ENCODE measurements at regions of chr4 and their contacts with region 1.

Region 1: DNA sequence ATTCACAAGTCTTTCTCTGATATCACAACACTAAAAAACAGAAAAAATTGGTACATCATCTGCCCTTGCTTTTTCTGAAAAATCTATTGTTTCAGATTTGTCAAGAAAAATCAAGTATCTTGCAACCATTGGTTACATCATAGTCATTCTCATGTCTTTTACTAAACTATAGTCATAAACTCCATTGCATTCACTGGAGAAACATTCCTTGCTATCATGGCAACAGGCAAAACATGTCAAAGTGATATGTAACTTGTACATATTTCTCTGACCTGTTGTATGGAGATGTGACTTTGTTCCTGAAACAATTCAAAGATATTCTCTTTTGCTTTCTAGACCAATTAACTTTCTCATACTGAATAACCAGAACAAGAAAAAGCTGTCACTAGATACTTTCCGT is 121.9 kb upstream of the ANK2 start:
- DNase-seq: no peak
- H3K4me3 ChIP-seq: no peak overlapping the region
- H3K27ac ChIP-seq: no peak overlapping the region
- H3K4me1 ChIP-seq: peaks cover 6% of the 10 kb centered on the region
- H3K27me3 ChIP-seq: no peaks in the 10 kb centered on the region
- CTCF ChIP-seq: no peak
- POLR2A ChIP-seq: no peak

Region 2: DNA sequence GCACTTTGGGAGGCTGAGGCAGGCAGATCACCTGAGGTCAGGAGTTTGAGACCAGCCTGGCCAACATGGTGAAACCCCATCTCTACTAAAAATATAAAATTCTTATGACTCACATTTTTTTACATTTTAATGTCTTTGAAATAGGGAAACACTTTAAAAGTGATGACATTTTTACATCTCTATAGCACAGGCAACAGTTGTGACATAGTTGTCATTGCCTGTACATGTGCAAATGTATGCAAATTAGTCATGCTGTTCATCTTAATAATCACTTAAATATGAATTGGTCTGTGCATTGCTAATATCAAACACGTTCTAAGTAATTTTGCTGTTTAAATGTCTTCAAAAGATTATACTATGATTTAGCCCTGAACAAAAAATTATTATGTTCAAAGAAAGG is 332.6 kb before region 1 on chr4:
- intact Hi-C with region 1: no loop called
- DNase-seq: no peak
- H3K4me3 ChIP-seq: no peak overlapping the region
- H3K27ac ChIP-seq: no peak overlapping the region
- H3K4me1 ChIP-seq: no peaks in the 10 kb centered on the region
- H3K27me3 ChIP-seq: no peaks in the 10 kb centered on the region
- CTCF ChIP-seq: no peak
- POLR2A ChIP-seq: no peak

Region 3: GRCh38 chr4:112626228-112626627 is 301.3 kb before region 1 on chr4:
- intact Hi-C with region 1: no loop called
- DNase-seq: no peak
- H3K4me3 ChIP-seq: no peak overlapping the region
- H3K27ac ChIP-seq: no peak overlapping the region
- H3K4me1 ChIP-seq: no peaks in the 10 kb centered on the region
- H3K27me3 ChIP-seq: no peaks in the 10 kb centered on the region
- CTCF ChIP-seq: no peak
- POLR2A ChIP-seq: no peak

Region 4: GRCh38 chr4:112648263-112649054 is 279.1 kb before region 1 on chr4:
- intact Hi-C with region 1: loop called (anchors 10 kb)
- DNase-seq: no peak
- H3K4me3 ChIP-seq: no peak overlapping the region
- H3K27ac ChIP-seq: no peak overlapping the region
- H3K4me1 ChIP-seq: no peaks in the 10 kb centered on the region
- H3K27me3 ChIP-seq: no peaks in the 10 kb centered on the region
- CTCF ChIP-seq: no peak
- POLR2A ChIP-seq: no peak

Region 5: GRCh38 chr4:112876316-112876715 is 51.2 kb before region 1 on chr4:
- intact Hi-C with region 1: no loop called
- DNase-seq: no peak
- H3K4me3 ChIP-seq: no peak overlapping the region
- H3K27ac ChIP-seq: no peak overlapping the region
- H3K4me1 ChIP-seq: no peaks in the 10 kb centered on the region
- H3K27me3 ChIP-seq: no peaks in the 10 kb centered on the region
- CTCF ChIP-seq: no peak
- POLR2A ChIP-seq: no peak